ENCODE measurements at regions of chr9 and their contacts with region 1.

Region 1: DNA sequence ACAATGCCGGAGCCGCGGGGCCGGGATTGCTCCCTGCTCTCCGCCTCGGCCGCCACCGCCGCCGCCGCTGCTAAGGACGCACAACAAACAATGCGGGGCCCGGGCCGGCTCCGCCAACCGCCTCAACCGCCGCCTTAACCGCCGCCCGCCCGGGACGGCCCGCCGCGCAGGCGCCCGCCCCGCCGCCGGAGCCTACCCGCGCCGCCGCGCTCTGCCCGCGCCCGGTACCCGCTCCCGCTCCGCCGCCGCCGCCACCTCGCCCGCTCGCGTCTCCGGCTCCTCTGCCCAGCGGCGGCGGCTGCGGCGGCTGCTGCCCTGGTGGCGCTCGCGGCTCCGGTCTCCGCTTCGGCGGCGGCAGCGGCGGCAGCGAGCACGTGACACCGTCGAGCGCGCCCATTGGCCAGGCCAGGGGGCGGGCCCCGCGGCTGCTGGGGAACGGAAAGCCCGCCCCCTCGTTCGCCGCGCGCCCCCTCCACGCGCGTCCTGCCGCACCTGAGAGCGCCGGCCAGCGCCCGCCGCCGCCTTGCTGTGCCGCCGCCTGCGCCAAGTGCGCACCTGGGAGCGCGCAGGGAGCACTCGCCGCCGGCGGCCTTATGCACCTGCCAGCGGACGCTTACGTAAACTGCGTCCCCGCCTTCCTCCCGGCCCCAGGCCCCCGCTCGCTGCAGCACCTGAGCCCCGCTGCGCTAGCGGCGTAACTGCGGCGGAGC is at the start of gene STRBP:
- DNase-seq: peak; percentile 90
- H3K4me3 ChIP-seq: peak within 1 kb of the TSS; percentile 79 to 83
- H3K27ac ChIP-seq: peak within 1 kb of the TSS; percentile 73 to 76
- H3K4me1 ChIP-seq: no peaks in the 10 kb centered on the region
- H3K27me3 ChIP-seq: no peaks in the 10 kb centered on the region
- CTCF ChIP-seq: peak in 2 of 4 experiments; percentile 37 to 46
- POLR2A ChIP-seq: peak; percentile 47
- total RNA-seq, gene STRBP: 20.1 to 24.5 TPM

Region 2: GRCh38 chr9:123069010-123069481 is 199.3 kb before region 1 on chr9:
- intact Hi-C with region 1: no loop called
- DNase-seq: no peak
- H3K4me3 ChIP-seq: no peak overlapping the region
- H3K27ac ChIP-seq: no peak overlapping the region
- H3K4me1 ChIP-seq: no peaks in the 10 kb centered on the region
- H3K27me3 ChIP-seq: no peaks in the 10 kb centered on the region
- CTCF ChIP-seq: no peak
- POLR2A ChIP-seq: no peak

Region 3: GRCh38 chr9:123318202-123318601 is 49.8 kb after region 1 on chr9:
- intact Hi-C with region 1: loop called (anchors 10 kb)
- DNase-seq: no peak
- H3K4me3 ChIP-seq: no peak overlapping the region
- H3K27ac ChIP-seq: no peak overlapping the region
- H3K4me1 ChIP-seq: peaks cover 14% of the 10 kb centered on the region
- H3K27me3 ChIP-seq: no peaks in the 10 kb centered on the region
- CTCF ChIP-seq: no peak
- POLR2A ChIP-seq: no peak

Region 4: DNA sequence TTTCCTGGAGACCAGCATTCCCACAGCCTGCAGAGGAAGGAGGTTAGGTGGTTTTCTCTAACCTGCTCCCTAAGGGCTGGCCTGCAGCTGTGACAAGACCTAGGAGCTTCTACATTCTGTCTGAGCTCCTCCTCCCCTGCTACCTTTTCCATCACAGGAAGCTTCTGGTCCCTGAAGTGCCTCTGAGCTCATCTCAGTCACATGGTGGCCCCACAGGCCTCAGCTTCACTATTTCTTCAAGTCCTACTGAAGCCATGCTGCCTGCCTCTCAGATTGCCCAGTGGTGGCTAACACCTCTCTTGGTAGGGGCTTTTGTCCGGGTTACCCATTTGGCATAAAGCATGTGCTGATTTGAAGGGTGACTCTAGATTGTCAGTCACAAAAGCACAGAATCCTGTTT is 347.0 kb after region 1 on chr9:
- intact Hi-C with region 1: no loop called
- DNase-seq: no peak
- H3K4me3 ChIP-seq: no peak overlapping the region
- H3K27ac ChIP-seq: no peak overlapping the region
- H3K4me1 ChIP-seq: no peaks in the 10 kb centered on the region
- H3K27me3 ChIP-seq: no peaks in the 10 kb centered on the region
- CTCF ChIP-seq: no peak
- POLR2A ChIP-seq: no peak